ENCODE measurements at regions of chr21 and their contacts with region 1.

Region 1: DNA sequence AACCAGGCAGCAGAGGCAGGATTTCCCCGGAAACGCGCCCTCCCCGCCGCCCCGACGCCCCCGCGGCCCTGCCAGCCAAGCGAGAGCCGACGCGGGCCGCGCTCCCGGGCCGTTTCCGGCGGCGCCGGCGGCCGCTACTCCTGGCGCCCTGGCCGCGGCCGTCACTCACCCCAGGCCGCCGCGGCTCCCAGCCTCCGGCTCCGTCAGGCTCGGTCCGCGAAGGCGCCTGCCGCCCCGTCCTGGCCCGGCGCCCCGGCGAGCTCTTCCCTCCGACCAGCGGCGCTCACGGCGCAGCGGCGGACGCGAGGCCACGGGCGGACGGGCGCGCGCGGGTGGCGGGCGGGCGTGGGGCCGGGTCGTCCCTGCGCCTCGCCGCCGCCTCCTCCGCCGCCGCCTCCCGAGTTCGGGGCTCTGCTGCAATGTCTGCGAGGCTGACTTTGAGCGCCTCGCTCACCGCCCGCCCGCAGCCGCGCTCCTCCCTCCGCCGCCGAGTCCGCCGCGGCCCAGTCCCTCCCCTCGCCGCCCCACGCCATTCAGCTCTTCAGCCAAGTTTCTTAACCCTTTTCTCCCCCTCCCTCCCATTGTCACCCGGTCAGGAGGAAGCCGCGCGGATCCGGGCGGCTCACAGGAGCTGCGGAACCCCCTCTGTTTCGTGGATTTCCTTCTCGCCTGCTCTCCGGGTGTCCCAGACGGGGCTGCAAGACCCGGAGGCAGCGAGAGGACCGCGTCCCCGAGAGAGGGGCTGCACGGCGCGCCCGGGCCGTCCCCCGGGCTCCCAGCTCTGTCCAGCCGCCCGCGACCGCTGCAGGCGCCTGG is at the start of gene NRIP1:
- DNase-seq: peak; percentile 96
- ATAC-seq: peak; percentile 96
- total RNA-seq, gene NRIP1: 16.0 TPM

Region 2: DNA sequence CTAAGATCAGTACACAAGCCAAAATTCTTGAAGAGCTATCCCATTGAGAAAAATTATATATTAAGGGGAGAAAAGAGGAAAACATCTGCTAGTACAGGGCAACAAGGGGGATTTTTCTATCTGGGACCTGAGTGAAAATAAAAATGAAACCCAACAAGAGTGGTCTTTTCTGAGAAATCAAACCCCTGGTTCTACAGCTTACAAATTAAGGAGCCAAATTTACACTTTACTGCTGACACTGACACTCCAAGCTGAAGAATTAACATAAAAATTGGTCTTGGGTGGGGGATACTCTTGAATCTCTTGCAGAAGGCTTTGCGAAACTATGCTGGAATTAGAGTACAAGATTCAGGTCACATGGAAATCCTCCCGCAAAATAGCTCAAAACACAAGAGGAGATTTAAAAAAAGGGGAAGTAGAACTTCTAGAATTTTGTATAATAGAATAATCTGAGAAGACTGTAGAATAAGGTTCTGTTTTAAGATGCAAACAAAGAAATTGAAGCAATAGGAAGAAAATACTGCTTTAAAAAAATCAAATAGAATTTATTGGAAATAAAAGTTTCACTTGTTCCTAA is 649.8 kb before region 1 on chr21:
- intact Hi-C with region 1: no loop called
- DNase-seq: no peak
- ATAC-seq: no peak

Region 3: DNA sequence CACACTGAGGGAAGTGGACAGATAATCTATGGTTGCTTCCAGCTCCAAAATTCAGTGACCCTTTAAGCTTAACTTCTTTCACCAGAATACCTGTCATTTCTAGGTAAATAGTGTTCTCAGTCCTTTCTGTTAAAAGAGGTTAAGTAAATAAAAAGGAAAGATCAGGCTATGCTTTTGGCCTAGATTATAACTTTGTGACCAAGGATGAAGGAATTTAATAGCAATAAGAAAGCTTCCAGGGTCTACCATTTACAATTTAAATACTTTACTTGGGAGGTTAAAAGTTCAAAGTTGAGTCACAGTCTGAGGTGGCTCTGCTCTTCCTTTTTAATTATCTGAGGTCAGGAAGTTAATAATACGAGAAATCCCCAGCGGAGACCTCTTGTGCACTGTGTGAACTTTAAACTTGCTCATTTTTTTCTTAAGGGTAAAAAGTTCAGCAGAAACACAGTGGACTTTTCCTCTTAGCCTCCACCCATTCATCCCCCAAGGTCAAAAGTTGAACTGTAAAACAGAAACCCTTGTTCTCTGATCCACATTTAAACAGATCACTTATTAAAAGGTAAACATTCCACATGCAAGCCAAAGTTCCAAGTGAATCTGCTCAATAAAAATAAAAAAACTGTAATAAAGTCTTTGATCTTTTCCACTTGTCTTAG is 187.1 kb before region 1 on chr21:
- intact Hi-C with region 1: loop called (anchors 5 kb)
- DNase-seq: no peak
- ATAC-seq: peak; percentile 45

Region 4: GRCh38 chr21:15121655-15122120 is 56.9 kb after region 1 on chr21:
- intact Hi-C with region 1: loop called (anchors 5 kb)
- DNase-seq: no peak
- ATAC-seq: peak; percentile 90

Region 5: GRCh38 chr21:15293240-15293639 is 228.5 kb after region 1 on chr21:
- intact Hi-C with region 1: loop called (anchors 10 kb)
- DNase-seq: no peak
- ATAC-seq: peak; percentile 80

Region 6: DNA sequence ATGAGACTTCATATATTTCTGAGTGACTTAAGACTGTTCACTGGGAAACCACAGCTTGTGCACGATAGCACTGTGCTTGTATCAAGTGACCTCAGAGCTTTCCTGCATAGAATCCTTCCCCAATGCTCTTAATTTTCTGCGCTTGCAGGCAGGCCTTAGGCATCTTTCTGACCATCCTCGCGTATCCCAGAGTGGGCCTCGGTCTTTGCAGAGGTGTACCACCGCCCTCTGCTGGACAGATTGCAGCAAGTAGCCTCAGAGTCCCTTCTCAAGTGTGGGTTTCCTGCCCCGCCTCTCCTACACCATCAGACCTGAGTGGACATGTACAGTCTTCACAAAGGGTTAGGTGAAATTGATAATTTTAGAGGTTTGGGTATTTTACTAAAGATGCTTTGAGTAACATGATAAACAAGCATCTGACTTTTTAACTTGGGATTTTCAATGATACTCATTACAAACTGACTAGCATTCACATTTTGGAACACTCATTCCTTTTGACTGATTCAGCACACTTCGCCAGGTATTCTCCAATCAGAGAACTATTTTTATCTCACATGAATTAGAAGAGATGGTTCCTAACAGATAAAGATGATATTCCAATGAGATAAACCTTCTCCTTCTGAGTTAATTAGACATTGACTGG is 418.5 kb after region 1 on chr21:
- intact Hi-C with region 1: loop called (anchors 2 kb)
- DNase-seq: peak; percentile 89
- ATAC-seq: peak; percentile 99